ENCODE measurements at regions of chr7 and their contacts with region 1.

Region 1: GRCh38 chr7:87933945-87934698 is at the start of gene ADAM22:
- DNase-seq: peak; percentile 77
- H3K4me3 Mint-ChIP-seq: peak within 1 kb of the TSS; percentile 91
- H3K27ac Mint-ChIP-seq: no peak within 1 kb of the TSS
- H3K4me1 Mint-ChIP-seq: peaks cover 7% of the 10 kb centered on the region
- H3K27me3 Mint-ChIP-seq: peaks cover 31% of the 10 kb centered on the region
- total RNA-seq, gene ADAM22: 3.7 and 4.0 TPM in 2 replicates

Region 2: DNA sequence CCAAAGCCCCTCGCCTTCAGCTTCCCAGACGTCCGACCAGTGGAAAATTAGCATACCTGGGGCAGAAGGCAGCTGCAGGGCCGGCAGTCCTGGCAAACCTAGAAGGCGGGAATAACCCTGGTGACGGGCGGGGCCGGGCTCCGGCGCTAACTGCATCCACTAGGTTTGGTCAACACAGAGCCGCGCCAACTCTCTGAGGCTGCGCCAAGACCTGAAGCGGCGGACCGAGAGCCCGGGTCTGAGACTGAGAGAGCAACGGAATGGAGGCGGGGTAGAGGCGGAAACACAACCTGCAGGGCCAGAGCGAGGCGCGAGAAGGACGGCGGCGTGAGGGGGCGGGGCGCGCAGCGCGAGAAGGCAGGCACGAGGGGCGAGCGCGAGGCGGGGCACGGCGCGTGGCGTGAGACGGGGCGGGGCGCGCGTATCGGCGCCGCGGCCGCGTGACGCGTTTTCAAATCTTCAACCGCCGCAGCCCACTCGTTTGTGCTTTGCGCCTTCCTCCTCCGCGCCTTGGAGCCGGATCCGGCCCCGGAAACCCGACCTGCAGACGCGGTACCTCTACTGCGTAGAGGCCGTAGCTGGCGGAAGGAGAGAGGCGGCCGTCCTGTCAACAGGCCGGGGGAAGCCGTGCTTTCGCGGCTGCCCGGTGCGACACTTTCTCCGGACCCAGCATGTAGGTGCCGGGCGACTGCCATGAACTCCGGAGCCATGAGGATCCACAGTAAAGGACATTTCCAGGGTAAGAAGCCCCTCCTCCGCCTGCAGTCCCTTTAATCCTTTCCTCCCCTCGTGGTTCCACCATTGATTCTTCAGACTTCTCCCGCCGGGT is 57.9 kb before region 1 on chr7 and contains the starts of genes DBF4 and SLC25A40:
- intact Hi-C with region 1: loop called (anchors 1 kb)
- DNase-seq: peak; percentile 96
- H3K4me3 Mint-ChIP-seq: peak within 1 kb of the TSS; percentile 96
- H3K27ac Mint-ChIP-seq: peak within 1 kb of the TSS; percentile 97
- H3K4me1 Mint-ChIP-seq: peaks cover 49% of the 10 kb centered on the region
- H3K27me3 Mint-ChIP-seq: no peaks in the 10 kb centered on the region
- total RNA-seq, gene DBF4: 72.3 and 75.3 TPM in 2 replicates
- total RNA-seq, gene SLC25A40: 48.7 and 49.3 TPM in 2 replicates

Region 3: DNA sequence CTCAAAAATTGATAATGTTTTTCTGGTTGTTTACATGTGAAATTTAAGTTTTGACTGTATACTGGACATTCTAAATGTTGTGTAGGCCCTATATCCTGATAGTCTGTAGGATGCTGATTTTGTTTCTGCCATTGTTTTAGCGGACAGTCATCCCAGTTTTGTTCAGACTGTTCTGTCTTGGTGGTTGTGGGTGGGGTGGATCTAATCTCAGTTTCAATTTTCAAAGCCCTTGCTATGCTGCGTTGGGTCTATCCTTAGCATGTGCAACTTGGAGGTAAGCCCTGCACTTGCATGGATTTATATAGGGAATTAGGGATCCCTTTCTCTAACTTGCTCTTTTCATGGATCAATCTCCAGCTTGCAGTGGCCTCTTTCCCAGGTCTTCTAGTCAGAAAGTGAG is 38.8 kb before region 1 on chr7:
- intact Hi-C with region 1: no loop called
- DNase-seq: no peak
- H3K4me3 Mint-ChIP-seq: no peak overlapping the region
- H3K27ac Mint-ChIP-seq: no peak overlapping the region
- H3K4me1 Mint-ChIP-seq: peaks cover 31% of the 10 kb centered on the region
- H3K27me3 Mint-ChIP-seq: no peaks in the 10 kb centered on the region

Region 4: GRCh38 chr7:87920578-87920977 is 13.5 kb before region 1 on chr7:
- intact Hi-C with region 1: no loop called
- DNase-seq: no peak
- H3K4me3 Mint-ChIP-seq: no peak overlapping the region
- H3K27ac Mint-ChIP-seq: no peak overlapping the region
- H3K4me1 Mint-ChIP-seq: no peaks in the 10 kb centered on the region
- H3K27me3 Mint-ChIP-seq: peaks cover 11% of the 10 kb centered on the region